Lower leg skin (tissue), 4 donors: ENCODE measurements at regions of chr7 and their contacts with region 1.

Region 1: GRCh38 chr7:133095119-133095671 is 13.3 kb upstream of the CHCHD3 start:
- DNase-seq: no peak
- H3K4me3 ChIP-seq: no peak overlapping the region
- CTCF ChIP-seq: no peak
- POLR2A ChIP-seq: no peak

Region 2: DNA sequence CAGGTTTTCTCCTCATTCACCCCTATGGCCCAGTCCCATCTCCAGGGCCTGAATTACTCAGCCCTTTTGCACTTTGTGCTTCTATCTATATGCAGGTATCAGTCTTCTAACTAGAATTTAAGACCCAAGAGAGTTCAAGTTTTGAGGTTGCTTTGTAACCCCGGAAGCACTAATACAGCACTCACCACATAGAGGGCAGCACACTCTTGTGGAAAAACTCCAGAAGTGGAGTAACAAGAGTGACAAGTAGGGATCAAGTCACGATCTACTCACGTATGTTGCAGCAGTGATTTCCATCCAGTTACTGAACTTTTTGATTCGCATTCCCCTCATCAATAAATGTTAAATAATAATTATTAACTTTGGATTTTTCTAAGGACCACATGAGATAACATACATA is 164.3 kb before region 1 on chr7:
- intact Hi-C with region 1: no loop called
- DNase-seq: no peak
- H3K4me3 ChIP-seq: no peak overlapping the region
- CTCF ChIP-seq: no peak
- POLR2A ChIP-seq: no peak

Region 3: DNA sequence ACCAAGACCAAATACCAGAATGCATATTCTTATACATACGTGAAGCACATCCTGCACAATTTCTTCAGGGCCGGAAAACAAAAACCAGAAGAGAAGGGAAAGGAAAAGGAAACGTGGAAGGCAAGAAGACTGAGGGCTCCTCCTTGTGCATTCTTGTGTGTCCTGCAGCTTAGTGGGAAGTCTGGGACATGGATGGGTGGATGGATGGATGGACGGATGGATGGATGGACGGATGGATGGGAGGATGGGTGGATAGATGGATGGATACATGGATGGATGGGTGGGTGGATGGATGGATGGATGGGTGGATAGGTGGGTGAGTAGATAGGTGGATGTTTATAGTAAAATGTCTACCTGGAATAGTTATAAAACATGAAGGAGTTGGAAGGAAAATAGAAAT is 1252.4 kb after region 1 on chr7:
- intact Hi-C with region 1: loop called (anchors 10 kb)
- DNase-seq: no peak
- H3K4me3 ChIP-seq: no peak overlapping the region
- CTCF ChIP-seq: no peak
- POLR2A ChIP-seq: no peak